Activated T-helper 2 cell treated with anti-CD3 and anti-CD28 coated beads, Interferon-gamma antibody, Interleukin-2, Interleukin-4, amounts not matched to agents 10 μg/mL and 5 μg/mL and 100 μg/mL, durations not matched to agents 14 hours and 24 hours and 36 hours (primary cell): ENCODE measurements at regions of chr12 and their contacts with region 1.

Region 1: DNA sequence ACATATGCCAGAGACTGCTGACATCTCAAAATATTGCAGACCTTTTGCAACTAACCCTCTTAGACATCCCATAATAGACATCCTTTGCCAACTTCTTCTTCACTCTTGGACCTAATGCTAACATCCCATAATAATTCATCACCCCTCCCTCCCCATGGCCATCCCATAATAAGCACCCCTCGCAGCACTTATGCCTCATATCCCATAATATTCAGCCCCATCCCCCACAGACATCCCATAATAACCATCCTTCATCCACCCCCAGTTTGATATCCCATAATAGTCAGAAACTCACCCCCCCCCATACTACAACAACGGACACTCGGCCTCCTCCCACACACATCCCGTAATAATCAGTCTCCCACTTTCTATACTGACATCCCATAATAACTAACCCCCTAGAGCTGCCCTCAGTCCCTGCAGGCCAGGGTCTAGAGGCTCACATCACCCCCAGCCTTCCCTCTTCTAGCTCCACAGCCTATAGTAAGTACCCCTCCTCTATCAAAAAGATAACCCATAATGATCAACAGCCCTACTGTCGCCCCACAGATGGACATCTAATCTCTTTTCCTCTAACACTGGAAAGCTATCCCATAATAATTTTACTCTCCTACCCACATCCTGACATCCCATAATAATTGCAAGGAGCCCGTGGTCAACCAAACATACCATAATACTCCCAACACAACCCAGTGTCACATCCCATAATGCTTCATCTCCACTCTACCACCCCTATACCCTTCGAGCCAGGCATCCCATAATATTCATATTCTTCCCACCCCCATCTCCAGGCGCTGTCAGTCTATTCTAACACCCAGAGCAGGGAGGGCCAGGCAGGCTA is 792 bp upstream of the CHD4 start:
- DNase-seq: peak; percentile 69
- H3K4me3 Mint-ChIP-seq: no peak overlapping the region
- H3K27ac Mint-ChIP-seq: no peak overlapping the region
- H3K4me1 Mint-ChIP-seq: peaks cover 45% of the 10 kb centered on the region
- H3K27me3 Mint-ChIP-seq: no peaks in the 10 kb centered on the region

Region 2: GRCh38 chr12:6533923-6534694 is 73.9 kb before region 1 on chr12 and contains the start of gene GAPDH:
- intact Hi-C with region 1: loop called (anchors 2 kb)
- DNase-seq: peak; percentile 87
- H3K4me3 Mint-ChIP-seq: peak within 1 kb of the TSS; percentile 94
- H3K27ac Mint-ChIP-seq: peak within 1 kb of the TSS; percentile 99
- H3K4me1 Mint-ChIP-seq: peaks cover 28% of the 10 kb centered on the region
- H3K27me3 Mint-ChIP-seq: no peaks in the 10 kb centered on the region
- total RNA-seq, gene GAPDH: 4,713 and 4,805 TPM in 2 replicates

Region 3: DNA sequence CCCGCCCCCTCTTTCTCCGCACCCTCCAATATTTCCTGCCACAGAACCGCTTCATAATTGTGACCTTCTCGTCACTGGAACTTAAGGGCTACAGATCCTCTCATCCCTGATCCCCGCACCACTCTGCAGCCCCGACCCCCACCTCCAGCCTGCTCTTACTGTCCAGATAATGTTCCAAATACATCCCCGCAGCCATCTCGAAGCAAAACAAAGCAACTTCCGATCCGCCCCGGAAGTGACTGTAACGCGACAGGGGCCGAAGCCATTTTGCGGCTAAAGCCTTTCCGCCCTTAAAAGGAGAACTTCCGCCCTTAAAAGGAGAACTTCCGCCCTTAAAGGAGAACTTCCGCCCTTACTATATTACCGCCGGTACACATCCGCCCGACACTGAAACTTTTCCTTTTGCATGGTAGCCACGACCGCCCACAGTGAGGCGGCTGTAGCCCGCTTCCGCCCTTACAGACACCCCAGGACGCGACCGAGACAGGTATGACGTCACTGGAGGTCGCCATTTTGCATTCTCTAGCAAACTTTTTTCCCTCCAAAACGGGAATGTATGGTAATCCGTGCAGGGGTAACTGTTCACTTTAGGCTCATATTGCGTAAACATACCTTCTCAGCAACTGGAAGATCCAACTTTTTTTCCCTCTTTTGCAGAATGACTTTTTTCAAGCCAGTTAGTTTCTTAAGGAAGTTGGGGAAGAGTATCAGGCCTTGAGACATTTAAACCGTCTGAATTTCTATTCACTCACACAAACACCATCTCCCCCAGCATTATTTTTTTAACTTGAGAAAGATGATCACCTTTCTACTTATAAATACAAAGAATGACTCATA is 55.2 kb after region 1 on chr12 and contains the start of gene ING4:
- intact Hi-C with region 1: loop called (anchors 1 kb)
- DNase-seq: peak; percentile 96
- H3K4me3 Mint-ChIP-seq: peak within 1 kb of the TSS; percentile 89
- H3K27ac Mint-ChIP-seq: peak within 1 kb of the TSS; percentile 91
- H3K4me1 Mint-ChIP-seq: peaks cover 17% of the 10 kb centered on the region
- H3K27me3 Mint-ChIP-seq: no peaks in the 10 kb centered on the region
- total RNA-seq, gene ING4: 18.5 and 19.1 TPM in 2 replicates

Region 4: GRCh38 chr12:6778574-6779550 is 170.9 kb after region 1 on chr12:
- intact Hi-C with region 1: loop called (anchors 5 kb)
- DNase-seq: peak; percentile 81
- H3K4me3 Mint-ChIP-seq: peak overlapping the region; percentile 71
- H3K27ac Mint-ChIP-seq: peak overlapping the region; percentile 66
- H3K4me1 Mint-ChIP-seq: peaks cover 77% of the 10 kb centered on the region
- H3K27me3 Mint-ChIP-seq: no peaks in the 10 kb centered on the region